Posterior vena cava (tissue), 2 donors: ENCODE measurements at regions of chr11 and their contacts with region 1.

Region 1: DNA sequence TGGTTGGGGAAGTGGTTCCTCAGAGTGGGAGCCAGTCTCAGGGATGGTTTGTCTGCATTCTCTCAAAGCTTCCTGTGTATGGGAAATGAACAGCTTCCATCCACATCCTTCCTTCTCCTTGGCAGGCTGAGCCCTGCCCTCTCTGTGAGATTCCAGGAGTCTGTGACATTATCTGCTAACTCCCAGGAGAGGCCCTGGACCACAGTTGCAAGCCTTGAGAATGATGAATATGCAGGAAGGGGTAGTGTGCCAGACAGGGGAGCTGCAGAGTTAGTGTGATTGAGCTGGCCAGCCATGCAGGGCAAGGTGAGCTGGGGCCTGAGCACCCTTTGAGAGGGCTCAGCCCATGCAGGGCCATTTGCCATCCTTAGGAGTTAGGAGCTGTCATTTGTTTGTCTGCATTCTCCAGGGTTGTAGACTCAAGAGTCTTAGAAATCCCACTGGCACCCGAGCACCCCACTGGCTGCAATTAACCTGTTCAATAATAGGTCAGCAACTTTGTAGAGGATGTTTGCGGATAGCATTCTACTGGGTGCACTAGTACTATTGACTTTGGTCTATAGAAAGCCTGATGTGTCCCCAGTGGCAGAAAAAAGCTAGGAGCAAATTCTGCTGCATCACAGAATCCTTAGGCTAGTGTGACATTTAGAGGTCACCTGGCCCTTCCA is 299.0 kb upstream of the CADM1 start:
- DNase-seq: no peak

Region 2: DNA sequence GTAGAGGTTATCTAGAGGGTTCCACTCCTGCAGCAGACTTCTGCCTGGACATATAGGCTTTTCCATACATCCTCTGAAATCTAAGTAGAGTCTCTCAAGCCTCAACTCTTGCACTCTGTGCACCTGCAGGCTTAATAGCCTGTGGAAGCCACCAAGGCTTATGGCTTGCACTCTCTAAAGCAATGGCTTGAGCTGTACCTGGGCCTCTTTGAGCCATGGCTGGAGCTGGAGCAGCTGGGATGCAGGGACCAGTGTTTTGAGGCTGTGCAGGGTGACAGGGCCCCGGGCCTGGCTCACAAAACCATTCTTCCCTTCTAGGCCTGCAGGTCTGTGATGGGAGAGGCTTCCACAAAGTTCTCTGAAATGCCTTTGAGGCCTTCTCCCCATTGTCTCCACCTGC is 1204.7 kb before region 1 on chr11:
- intact Hi-C with region 1: loop called in 1 of 2 experiments (anchors 5 kb)
- DNase-seq: no peak

Region 3: DNA sequence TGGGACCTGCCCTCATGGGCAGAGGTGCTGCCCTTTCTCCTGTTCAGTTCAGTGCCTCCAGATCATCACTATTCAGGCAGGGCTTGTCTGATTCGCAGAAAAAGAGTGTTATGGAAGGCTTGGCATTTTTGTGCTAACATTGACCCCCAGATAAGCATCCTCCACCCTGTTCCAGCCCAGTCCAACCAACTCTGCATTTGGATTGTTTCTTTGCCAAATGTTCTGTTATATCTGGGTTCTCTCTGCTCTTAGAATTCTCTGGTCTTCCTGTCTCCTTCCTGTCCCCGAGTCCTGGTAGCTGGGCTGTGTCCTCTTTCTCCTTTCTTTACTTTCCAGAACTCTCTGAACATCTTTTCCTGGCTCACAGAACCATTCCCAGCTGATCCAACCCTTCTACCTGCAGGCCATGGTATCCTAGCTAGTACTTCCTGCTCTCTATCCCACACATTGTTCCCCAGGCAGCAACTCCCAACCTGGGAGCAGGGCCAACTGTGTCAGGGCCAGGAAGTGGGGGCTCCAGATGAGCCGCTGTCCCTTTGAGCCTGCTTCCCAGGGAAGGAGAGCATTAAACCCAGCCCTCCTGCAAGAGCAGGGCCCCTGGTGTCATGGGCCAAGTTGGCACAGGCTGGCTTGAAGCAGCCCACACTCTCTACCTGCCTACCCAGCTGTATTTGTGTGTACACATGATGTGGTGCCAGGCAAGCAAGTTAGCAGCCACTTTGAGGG is 18.2 kb before region 1 on chr11:
- intact Hi-C with region 1: no loop called
- DNase-seq: no peak